Adrenal gland (tissue), 19 donors: ENCODE measurements at regions of chr15 and their contacts with region 1.

Region 1: GRCh38 chr15:26421065-26421464 is 351.8 kb downstream of the GABRB3 start:
- DNase-seq: no peak
- H3K4me3 ChIP-seq: no peak overlapping the region
- H3K27ac ChIP-seq: no peak overlapping the region
- H3K4me1 ChIP-seq: no peaks in the 10 kb centered on the region
- H3K27me3 ChIP-seq: no peaks in the 10 kb centered on the region
- CTCF ChIP-seq: no peak
- POLR2A ChIP-seq: no peak

Region 2: GRCh38 chr15:26461847-26462608 is 41.0 kb after region 1 on chr15:
- intact Hi-C with region 1: loop called in 1 of 2 experiments (anchors 10 kb)
- DNase-seq: no peak
- H3K4me3 ChIP-seq: no peak overlapping the region
- H3K27ac ChIP-seq: no peak overlapping the region
- H3K4me1 ChIP-seq: no peaks in the 10 kb centered on the region
- H3K27me3 ChIP-seq: no peaks in the 10 kb centered on the region
- CTCF ChIP-seq: no peak
- POLR2A ChIP-seq: no peak

Region 3: GRCh38 chr15:26516102-26516980 is 95.3 kb after region 1 on chr15:
- intact Hi-C with region 1: no loop called
- DNase-seq: no peak
- H3K4me3 ChIP-seq: no peak overlapping the region
- H3K27ac ChIP-seq: no peak overlapping the region
- H3K4me1 ChIP-seq: no peaks in the 10 kb centered on the region
- H3K27me3 ChIP-seq: no peaks in the 10 kb centered on the region
- CTCF ChIP-seq: no peak
- POLR2A ChIP-seq: no peak